Gastrocnemius medialis (tissue), 4 donors: ENCODE measurements at regions of chr5 and their contacts with region 1.

Region 1: DNA sequence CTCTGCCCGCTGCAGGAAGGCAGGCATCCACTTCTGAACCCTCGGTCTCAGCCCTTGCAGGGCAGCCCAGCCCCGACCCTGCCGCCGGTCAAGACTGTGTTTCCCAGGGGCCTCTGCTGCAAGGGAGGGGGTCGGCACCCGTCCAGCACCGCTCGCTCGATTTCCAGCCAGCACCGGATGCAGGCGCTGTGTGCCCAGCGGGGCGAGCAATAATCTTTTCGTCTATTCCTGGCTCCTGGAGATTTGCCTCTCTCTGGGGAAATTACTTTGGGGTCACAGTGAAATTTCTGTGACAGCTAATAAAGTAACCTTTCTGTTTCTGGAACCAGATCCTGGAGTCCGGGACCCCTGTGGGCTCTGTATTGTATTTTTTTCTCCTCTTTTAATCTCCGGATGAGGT is 155.3 kb downstream of the COL23A1 start:
- DNase-seq: peak in 1 of 2 donors; percentile 26
- ATAC-seq: no peak
- H3K4me3 ChIP-seq: peak overlapping the region in 2 of 4 donors; percentile 5 to 25
- H3K27ac ChIP-seq: no peak overlapping the region
- H3K4me1 ChIP-seq: peaks cover 9 to 11% of the 10 kb centered on the region in 2 donors
- H3K27me3 ChIP-seq: no peaks in the 10 kb centered on the region
- CTCF ChIP-seq: no peak
- POLR2A ChIP-seq: no peak

Region 2: DNA sequence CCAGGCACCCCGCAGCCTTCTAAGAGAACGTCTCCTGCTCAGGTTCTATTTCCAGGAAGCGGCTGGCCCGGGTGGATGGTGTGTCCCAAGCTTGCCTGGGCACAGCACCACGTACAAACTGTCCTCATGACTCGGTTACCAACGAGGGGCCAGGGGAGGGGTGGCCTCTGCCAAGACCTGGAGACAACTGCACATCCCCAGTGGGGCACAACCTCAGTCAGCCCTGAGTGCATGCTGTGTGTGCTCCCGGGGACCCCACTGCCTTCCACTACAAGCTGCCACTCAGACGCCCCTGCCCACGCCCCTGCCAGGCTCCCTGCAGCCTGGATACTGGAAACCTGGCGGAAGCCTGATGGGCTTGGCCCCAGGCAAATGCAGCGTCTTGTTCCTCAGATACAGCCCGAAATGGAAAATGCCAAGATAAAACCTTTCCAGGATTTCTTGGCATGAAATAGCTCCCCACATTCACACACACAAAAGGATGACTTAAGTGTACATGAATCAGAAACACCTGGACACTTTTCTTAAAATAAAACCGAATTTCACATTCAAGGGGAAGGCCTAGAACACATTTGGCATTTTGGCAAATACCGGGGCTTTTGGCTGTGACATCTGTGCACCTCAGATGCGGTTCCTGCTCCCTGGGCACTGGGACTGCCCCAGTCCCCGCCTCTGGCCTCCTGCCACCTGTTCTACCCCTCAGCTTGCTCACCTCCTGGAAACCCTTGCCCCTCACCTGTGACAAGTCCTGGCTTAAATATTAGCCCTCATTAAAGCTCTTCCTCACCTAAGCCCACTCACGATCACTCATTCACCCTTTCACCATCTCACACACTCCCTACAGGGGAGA is 92.8 kb after region 1 on chr5:
- in situ Hi-C with region 1: no loop called
- intact Hi-C with region 1: loop called (anchors 5 kb)
- DNase-seq: peak; percentile 87 to 91
- ATAC-seq: peak; percentile 86 to 91
- H3K4me3 ChIP-seq: no peak overlapping the region
- H3K27ac ChIP-seq: peak overlapping the region; percentile 60 to 91 (median 76)
- H3K4me1 ChIP-seq: peaks cover 19 to 30% of the 10 kb centered on the region in 2 donors
- H3K27me3 ChIP-seq: no peaks in the 10 kb centered on the region
- CTCF ChIP-seq: no peak
- POLR2A ChIP-seq: no peak